MCF 10A (cell line): ENCODE measurements at regions of chr2 and their contacts with region 1.

Region 1: GRCh38 chr2:94874277-94875008 is 3.2 kb downstream of the TEKT4 start:
- DNase-seq: peak; percentile 50
- H3K4me3 Mint-ChIP-seq: no peak overlapping the region
- H3K27ac Mint-ChIP-seq: no peak overlapping the region
- H3K4me1 Mint-ChIP-seq: no peaks in the 10 kb centered on the region
- H3K27me3 Mint-ChIP-seq: peaks cover 11% of the 10 kb centered on the region
- CTCF ChIP-seq: peak; percentile 97

Region 2: DNA sequence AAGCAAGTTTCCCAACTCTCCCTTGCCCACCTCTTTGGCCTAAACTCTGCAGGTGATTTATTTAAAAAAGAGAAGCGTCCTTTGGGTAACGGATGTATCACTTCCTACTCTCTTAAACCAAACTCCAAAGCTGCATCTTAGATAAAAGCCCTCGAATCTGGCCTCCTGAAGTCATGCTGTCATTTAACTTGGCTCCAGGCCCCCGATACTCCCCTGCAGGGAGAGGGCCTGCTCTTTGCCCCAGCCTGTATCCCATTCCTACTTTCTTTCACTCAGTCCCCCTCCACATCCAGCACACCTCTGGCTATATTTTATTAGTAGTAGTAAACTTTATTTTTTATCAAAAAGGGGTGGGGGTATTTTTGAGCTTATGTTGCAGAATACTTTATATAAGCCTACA is 15.8 kb after region 1 on chr2:
- CTCF ChIA-PET with region 1: interaction called, 10 read pairs
- POLR2A ChIA-PET with region 1: no interaction called
- intact Hi-C with region 1: no loop called
- DNase-seq: no peak
- H3K4me3 Mint-ChIP-seq: no peak overlapping the region
- H3K27ac Mint-ChIP-seq: no peak overlapping the region
- H3K4me1 Mint-ChIP-seq: peaks cover 5% of the 10 kb centered on the region
- H3K27me3 Mint-ChIP-seq: peaks cover 50% of the 10 kb centered on the region
- CTCF ChIP-seq: no peak

Region 3: DNA sequence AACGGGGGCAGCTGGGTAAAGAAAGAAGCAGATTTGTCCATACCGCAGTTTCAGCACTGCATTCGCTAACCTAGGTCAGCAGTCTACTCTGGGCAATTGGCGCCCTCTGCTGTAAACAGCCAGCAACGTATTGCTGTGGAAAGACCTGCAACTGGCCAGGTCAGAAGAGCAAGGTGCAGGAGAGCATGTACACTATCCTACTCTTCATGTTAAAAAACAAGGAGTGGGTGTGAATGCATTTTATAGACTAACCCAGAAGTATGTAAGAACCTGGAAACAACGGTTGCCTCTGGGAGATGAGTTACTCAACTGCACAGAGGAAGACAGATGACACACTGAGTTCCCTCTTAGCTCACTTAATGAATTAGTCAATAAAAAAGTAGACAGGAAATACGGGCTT is 241.0 kb after region 1 on chr2:
- CTCF ChIA-PET with region 1: no interaction called
- POLR2A ChIA-PET with region 1: no interaction called
- intact Hi-C with region 1: loop called (anchors 10 kb)
- DNase-seq: peak; percentile 65
- H3K4me3 Mint-ChIP-seq: no peak overlapping the region
- H3K27ac Mint-ChIP-seq: no peak overlapping the region
- H3K4me1 Mint-ChIP-seq: peaks cover 20% of the 10 kb centered on the region
- H3K27me3 Mint-ChIP-seq: no peaks in the 10 kb centered on the region
- CTCF ChIP-seq: peak; percentile 78